SK-N-SH (cell line): ENCODE measurements at regions of chr4 and their contacts with region 1.

Region 1: DNA sequence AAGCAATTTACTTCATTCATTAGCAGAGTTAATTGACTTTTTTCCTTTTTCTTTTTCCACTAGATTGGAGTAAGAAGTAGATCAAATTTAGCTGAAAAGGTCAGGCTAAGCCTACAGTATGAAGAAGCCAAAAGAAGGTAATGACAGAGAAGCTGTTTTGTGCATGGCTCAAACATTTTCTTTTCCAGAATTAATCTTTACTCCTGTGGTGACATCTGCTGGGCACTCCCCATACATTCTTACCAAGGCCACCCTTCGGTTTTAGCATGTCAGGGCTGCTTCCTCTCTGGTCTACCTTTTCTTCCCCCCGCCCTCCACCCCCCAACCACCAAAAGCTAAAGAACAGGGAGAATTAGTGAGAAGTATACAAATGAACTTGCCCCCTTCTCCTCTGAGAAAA is 70.2 kb downstream of the CLDN22 start:
- DNase-seq: peak; percentile 57
- H3K4me3 ChIP-seq: no peak overlapping the region
- H3K27ac ChIP-seq: no peak overlapping the region
- H3K4me1 ChIP-seq: no peaks in the 10 kb centered on the region; a peak in 2 of 4 replicates
- H3K27me3 ChIP-seq: no peaks in the 10 kb centered on the region
- CTCF ChIP-seq: peak; percentile 63
- EP300 ChIP-seq: no peak
- RAD21 ChIP-seq: peak; percentile 86

Region 2: DNA sequence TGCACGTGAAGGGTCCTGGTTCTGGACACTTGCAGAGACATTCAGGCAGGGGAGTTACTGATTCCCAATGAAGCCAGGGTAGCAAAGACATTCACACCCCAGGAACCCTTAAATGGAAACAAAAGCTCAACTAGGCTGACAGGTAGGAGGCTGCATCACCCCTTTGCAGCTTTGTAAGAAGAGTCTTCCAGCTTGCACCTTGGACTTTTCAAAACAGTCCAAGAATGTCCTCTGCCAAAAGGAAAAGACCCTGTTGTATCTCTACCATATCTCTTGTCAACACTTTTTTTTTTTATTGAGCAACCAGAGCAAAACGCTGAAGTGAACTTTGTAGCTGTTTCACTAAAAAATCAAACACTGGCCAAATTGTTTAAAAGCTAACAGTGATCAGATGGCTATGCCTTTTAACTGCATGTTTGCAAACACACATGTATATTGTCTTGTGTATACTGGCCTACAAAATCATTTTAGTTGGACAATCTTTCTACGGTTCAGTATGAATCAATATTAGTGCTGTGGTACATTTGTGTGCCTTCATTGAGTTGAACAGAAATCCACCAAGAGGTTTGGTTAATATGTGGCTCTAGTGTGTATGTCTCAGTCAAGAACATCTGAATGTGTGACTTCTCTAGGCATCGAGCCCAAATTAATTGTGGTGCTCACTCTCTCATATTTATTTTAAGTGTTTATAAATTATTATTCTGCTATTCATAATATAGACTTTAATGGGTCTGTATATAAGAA is 169.3 kb before region 1 on chr4:
- CTCF ChIA-PET with region 1: interaction called, 63 read pairs
- POLR2A ChIA-PET with region 1: no interaction called
- DNase-seq: no peak
- H3K4me3 ChIP-seq: no peak overlapping the region
- H3K27ac ChIP-seq: no peak overlapping the region
- H3K4me1 ChIP-seq: no peaks in the 10 kb centered on the region
- H3K27me3 ChIP-seq: no peaks in the 10 kb centered on the region
- CTCF ChIP-seq: no peak
- EP300 ChIP-seq: no peak
- RAD21 ChIP-seq: no peak

Region 3: GRCh38 chr4:183098723-183099536 is 150.9 kb before region 1 on chr4 and contains the start of gene WWC2:
- CTCF ChIA-PET with region 1: interaction called, 10 read pairs
- POLR2A ChIA-PET with region 1: no interaction called
- DNase-seq: peak; percentile 92
- H3K4me3 ChIP-seq: peak within 1 kb of the TSS; percentile 86 to 94
- H3K27ac ChIP-seq: peak within 1 kb of the TSS; percentile 86 to 96
- H3K4me1 ChIP-seq: peaks cover 2 to 38% of the 10 kb centered on the region in 2 experiments
- H3K27me3 ChIP-seq: no peaks in the 10 kb centered on the region
- CTCF ChIP-seq: no peak
- EP300 ChIP-seq: no peak; a peak in 1 of 4 replicates
- RAD21 ChIP-seq: no peak
- polyA plus RNA-seq, gene WWC2: 18.4 and 19.0 TPM in 2 replicates

Region 4: DNA sequence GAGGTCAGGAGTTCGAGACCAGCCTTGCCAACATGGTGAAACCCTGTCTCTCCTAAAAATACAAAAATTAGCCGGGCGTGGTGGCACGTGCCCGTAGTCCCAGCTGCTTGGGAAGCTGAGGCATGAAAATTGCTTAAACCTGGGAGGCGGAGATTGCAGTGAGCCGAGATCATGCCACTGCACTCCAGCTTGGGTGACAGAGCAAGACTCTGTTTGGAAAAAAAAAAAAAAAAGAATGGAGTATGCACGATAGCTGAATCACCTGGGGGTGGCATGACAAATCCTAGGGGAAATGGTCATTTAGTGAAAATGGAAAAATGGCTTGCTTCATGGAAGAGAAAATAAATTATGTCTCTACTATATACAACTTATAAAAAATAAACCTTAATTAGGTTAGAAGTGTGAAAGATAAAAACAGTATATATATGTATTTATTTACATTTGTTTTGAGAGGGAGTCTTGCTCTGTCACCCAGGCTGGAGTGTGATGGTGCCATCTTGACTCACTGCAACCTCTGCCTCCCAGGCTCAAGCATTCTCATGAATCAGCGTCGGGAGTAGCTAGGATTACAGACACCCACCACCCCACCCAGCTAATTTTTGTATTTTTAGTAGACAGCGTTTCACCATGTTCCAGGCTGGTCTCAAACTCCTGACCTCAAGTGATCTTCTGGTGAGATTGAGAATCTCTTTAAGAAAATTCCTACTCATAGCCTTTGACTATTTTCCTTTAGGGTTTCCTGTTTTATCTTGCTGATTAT is 235.7 kb after region 1 on chr4:
- CTCF ChIA-PET with region 1: no interaction called
- POLR2A ChIA-PET with region 1: no interaction called
- DNase-seq: no peak
- H3K4me3 ChIP-seq: no peak overlapping the region
- H3K27ac ChIP-seq: no peak overlapping the region
- H3K4me1 ChIP-seq: no peaks in the 10 kb centered on the region
- H3K27me3 ChIP-seq: no peaks in the 10 kb centered on the region
- CTCF ChIP-seq: no peak
- EP300 ChIP-seq: no peak
- RAD21 ChIP-seq: no peak